ENCODE measurements at regions of chr11 and their contacts with region 1.

Region 1: GRCh38 chr11:9613118-9613829 is 39.8 kb downstream of the WEE1 start:
- DNase-seq: peak; percentile 70 to 90 (median 84)
- ATAC-seq: peak; percentile 49
- H3K4me3 ChIP-seq: peak overlapping the region; percentile 69 to 70
- H3K4me3 Mint-ChIP-seq: peak overlapping the region; percentile 97
- H3K27ac ChIP-seq: peak overlapping the region; percentile 49 to 88
- H3K27ac Mint-ChIP-seq: peak overlapping the region; percentile 94
- H3K4me1 ChIP-seq: peaks cover 12% of the 10 kb centered on the region
- H3K4me1 Mint-ChIP-seq: peaks cover 16% of the 10 kb centered on the region
- H3K27me3 ChIP-seq: no peaks in the 10 kb centered on the region
- H3K27me3 Mint-ChIP-seq: no peaks in the 10 kb centered on the region
- CTCF ChIP-seq: peak; percentile 79

Region 2: DNA sequence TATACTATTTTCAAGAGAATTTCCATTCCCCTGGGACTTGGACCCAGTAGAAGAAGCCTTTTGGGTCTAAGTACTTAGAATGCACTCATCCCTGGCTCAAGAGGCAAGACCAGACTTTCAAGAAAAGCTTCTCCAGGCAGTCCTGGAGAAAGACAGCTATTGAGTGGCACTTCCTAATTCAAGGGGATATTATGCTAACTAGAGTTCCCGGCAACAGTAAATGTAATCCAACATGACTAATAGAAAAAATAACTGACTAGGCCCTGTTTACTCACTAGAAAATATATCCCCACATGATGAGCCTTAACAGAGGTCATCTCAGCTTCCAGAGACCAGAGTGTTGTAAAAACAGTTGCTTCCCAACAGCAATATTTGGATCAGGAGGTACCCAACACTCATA is 749.4 kb before region 1 on chr11:
- CTCF ChIA-PET with region 1: no interaction called
- POLR2A ChIA-PET with region 1: no interaction called
- intact Hi-C with region 1: no loop called
- DNase-seq: no peak
- ATAC-seq: no peak
- H3K4me3 ChIP-seq: no peak overlapping the region
- H3K4me3 Mint-ChIP-seq: no peak overlapping the region
- H3K27ac ChIP-seq: no peak overlapping the region
- H3K27ac Mint-ChIP-seq: no peak overlapping the region
- H3K4me1 ChIP-seq: no peaks in the 10 kb centered on the region
- H3K4me1 Mint-ChIP-seq: no peaks in the 10 kb centered on the region
- H3K27me3 ChIP-seq: no peaks in the 10 kb centered on the region
- H3K27me3 Mint-ChIP-seq: peaks cover 35% of the 10 kb centered on the region
- CTCF ChIP-seq: no peak

Region 3: DNA sequence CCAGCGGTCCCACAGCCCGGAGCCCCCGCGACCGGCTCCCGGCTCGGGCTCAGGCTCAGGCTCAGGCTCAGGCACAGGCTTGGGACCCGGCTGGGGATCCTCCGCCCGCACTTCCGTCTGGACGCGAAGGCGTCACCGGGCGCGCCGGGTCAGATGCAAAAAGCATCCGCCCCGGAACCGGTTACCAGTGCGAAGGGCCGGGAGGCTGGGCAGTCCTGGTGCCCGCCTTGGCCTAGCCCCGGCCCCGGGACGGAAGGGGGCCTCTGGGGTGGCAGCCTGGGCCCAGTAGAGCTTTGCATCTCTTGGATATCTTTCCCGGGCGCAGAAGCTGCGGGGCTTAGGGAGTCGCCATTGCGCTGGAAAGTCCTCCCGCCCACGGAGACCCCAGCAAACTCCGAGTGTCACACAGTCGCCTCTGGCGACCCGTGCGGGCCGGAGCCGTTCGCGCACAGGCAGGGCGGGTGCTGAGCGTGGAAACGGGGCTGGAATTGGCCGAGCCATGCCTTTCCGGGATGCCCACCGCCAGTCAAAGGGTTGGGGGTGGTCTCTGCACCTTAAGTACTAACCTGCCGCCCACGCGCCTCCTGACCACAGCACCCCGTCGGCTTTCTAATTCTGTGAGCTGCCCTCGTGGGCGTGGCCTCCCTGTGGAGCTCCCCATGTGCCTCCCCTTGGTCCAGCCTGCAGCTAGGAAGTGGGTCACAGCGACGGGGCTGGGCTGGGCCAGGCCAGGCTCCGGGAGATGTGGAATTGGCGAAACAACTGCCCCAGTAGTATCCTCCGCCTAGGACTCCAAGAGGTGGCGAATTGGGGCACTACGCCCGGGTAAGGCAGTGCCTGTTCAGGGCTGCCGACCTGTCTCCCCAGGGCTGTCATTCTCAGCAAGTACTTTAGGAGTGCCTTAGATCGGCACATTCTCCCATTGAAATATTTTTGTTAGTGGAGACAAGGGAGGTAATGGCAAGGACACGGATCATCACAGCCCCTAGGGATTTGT is 648.7 kb before region 1 on chr11 and contains the start of gene TMEM9B:
- CTCF ChIA-PET with region 1: interaction called, 3 read pairs
- POLR2A ChIA-PET with region 1: no interaction called
- intact Hi-C with region 1: loop called in 1 of 2 experiments (anchors 1 kb)
- DNase-seq: peak; percentile 48 to 89 (median 75)
- ATAC-seq: peak; percentile 72
- H3K4me3 ChIP-seq: peak within 1 kb of the TSS; percentile 93 to 98
- H3K4me3 Mint-ChIP-seq: peak within 1 kb of the TSS; percentile 98
- H3K27ac ChIP-seq: peak within 1 kb of the TSS; percentile 94 to 99
- H3K27ac Mint-ChIP-seq: peak within 1 kb of the TSS; percentile 98
- H3K4me1 ChIP-seq: peaks cover 24% of the 10 kb centered on the region
- H3K4me1 Mint-ChIP-seq: peaks cover 36% of the 10 kb centered on the region
- H3K27me3 ChIP-seq: no peaks in the 10 kb centered on the region
- H3K27me3 Mint-ChIP-seq: no peaks in the 10 kb centered on the region
- CTCF ChIP-seq: no peak
- total RNA-seq, gene TMEM9B: 27.5 to 28.5 TPM

Region 4: DNA sequence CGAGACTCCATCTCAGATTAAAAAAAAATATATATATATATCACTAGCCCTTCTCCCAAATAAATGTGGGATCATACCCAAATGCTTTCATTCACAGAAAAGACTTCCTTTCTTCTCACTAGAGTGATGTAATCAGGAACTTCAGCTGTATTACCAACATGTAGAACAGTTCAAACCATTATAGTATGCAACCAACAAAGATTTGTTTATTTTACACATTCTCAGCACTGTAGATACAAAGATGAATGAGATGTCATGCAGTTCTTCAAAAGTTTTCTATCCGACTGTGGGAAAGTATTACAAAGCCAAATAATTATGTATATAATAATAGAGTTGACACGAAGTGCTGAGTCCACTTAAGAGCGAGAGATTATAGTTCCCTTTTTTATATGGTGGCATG is 174.7 kb before region 1 on chr11:
- CTCF ChIA-PET with region 1: no interaction called
- POLR2A ChIA-PET with region 1: no interaction called
- intact Hi-C with region 1: no loop called
- DNase-seq: no peak
- ATAC-seq: no peak
- H3K4me3 ChIP-seq: no peak overlapping the region
- H3K4me3 Mint-ChIP-seq: no peak overlapping the region
- H3K27ac ChIP-seq: no peak overlapping the region
- H3K27ac Mint-ChIP-seq: no peak overlapping the region
- H3K4me1 ChIP-seq: no peaks in the 10 kb centered on the region
- H3K4me1 Mint-ChIP-seq: no peaks in the 10 kb centered on the region
- H3K27me3 ChIP-seq: no peaks in the 10 kb centered on the region
- H3K27me3 Mint-ChIP-seq: no peaks in the 10 kb centered on the region
- CTCF ChIP-seq: no peak

Region 5: GRCh38 chr11:9601037-9601875 is 12.0 kb before region 1 on chr11:
- CTCF ChIA-PET with region 1: interaction called, 38 read pairs
- POLR2A ChIA-PET with region 1: interaction called, 17 read pairs
- intact Hi-C with region 1: no loop called
- DNase-seq: peak in 8 of 9 experiments; percentile 28 to 91 (median 57)
- ATAC-seq: peak; percentile 90
- H3K4me3 ChIP-seq: peak overlapping the region; percentile 5 to 28
- H3K4me3 Mint-ChIP-seq: peak overlapping the region; percentile 62
- H3K27ac ChIP-seq: peak overlapping the region; percentile 3 to 79
- H3K27ac Mint-ChIP-seq: peak overlapping the region; percentile 89
- H3K4me1 ChIP-seq: peaks cover 14% of the 10 kb centered on the region
- H3K4me1 Mint-ChIP-seq: peaks cover 20% of the 10 kb centered on the region
- H3K27me3 ChIP-seq: no peaks in the 10 kb centered on the region
- H3K27me3 Mint-ChIP-seq: peaks cover 3% of the 10 kb centered on the region
- CTCF ChIP-seq: no peak

Region 6: GRCh38 chr11:9663699-9664275 is 50.5 kb after region 1 on chr11 and contains the start of gene SWAP70:
- CTCF ChIA-PET with region 1: interaction called, 4 read pairs
- POLR2A ChIA-PET with region 1: no interaction called
- intact Hi-C with region 1: loop called in 1 of 2 experiments (anchors 5 kb)
- DNase-seq: peak; percentile 47 to 82 (median 74)
- ATAC-seq: peak; percentile 90
- H3K4me3 ChIP-seq: peak within 1 kb of the TSS; percentile 78 to 80
- H3K4me3 Mint-ChIP-seq: peak within 1 kb of the TSS; percentile 88
- H3K27ac ChIP-seq: peak within 1 kb of the TSS in 1 of 2 experiments; percentile 11
- H3K27ac Mint-ChIP-seq: peak within 1 kb of the TSS; percentile 75
- H3K4me1 ChIP-seq: peaks cover 11% of the 10 kb centered on the region
- H3K4me1 Mint-ChIP-seq: peaks cover 19% of the 10 kb centered on the region
- H3K27me3 ChIP-seq: peaks cover 0 to 3% of the 10 kb centered on the region in 2 experiments
- H3K27me3 Mint-ChIP-seq: peaks cover 28% of the 10 kb centered on the region
- CTCF ChIP-seq: no peak
- total RNA-seq, gene SWAP70: 4.2 to 4.6 TPM

Region 7: DNA sequence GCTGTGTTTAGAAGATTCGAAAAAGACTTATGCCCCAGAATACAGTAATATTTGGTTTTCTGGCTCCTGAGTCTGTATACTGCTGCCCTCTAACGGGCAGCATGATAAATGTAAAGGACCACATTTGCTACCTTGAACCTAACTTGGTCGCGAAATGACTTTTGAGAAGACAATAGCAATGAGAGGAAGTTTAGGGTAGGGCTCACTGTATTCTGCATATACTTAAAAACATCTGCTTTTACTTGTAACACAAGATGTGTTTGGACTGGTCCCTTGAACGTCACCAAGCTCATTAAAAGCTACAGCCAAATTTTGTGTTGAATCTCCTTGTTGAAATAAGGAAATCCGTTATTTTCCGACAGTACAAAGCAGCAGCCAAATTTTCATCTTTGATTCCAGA is 359.7 kb after region 1 on chr11:
- CTCF ChIA-PET with region 1: no interaction called
- POLR2A ChIA-PET with region 1: no interaction called
- intact Hi-C with region 1: loop called in 1 of 2 experiments (anchors 2 kb)
- DNase-seq: peak in 2 of 9 experiments; percentile 23 to 54
- ATAC-seq: peak; percentile 54
- H3K4me3 ChIP-seq: no peak overlapping the region
- H3K4me3 Mint-ChIP-seq: no peak overlapping the region
- H3K27ac ChIP-seq: no peak overlapping the region
- H3K27ac Mint-ChIP-seq: no peak overlapping the region
- H3K4me1 ChIP-seq: no peaks in the 10 kb centered on the region
- H3K4me1 Mint-ChIP-seq: no peaks in the 10 kb centered on the region
- H3K27me3 ChIP-seq: no peaks in the 10 kb centered on the region
- H3K27me3 Mint-ChIP-seq: no peaks in the 10 kb centered on the region
- CTCF ChIP-seq: peak; percentile 53

Region 8: GRCh38 chr11:10455637-10456487 is 842.6 kb after region 1 on chr11:
- CTCF ChIA-PET with region 1: no interaction called
- POLR2A ChIA-PET with region 1: no interaction called
- intact Hi-C with region 1: loop called in 1 of 2 experiments (anchors 5 kb)
- DNase-seq: peak; percentile 30 to 87 (median 74)
- ATAC-seq: peak; percentile 74
- H3K4me3 ChIP-seq: peak overlapping the region; percentile 52 to 54
- H3K4me3 Mint-ChIP-seq: peak overlapping the region; percentile 91
- H3K27ac ChIP-seq: peak overlapping the region; percentile 10 to 67
- H3K27ac Mint-ChIP-seq: peak overlapping the region; percentile 98
- H3K4me1 ChIP-seq: peaks cover 58% of the 10 kb centered on the region
- H3K4me1 Mint-ChIP-seq: peaks cover 81% of the 10 kb centered on the region
- H3K27me3 ChIP-seq: no peaks in the 10 kb centered on the region
- H3K27me3 Mint-ChIP-seq: no peaks in the 10 kb centered on the region
- CTCF ChIP-seq: no peak

Measured in CD8-positive, alpha-beta T cell (primary cell).